ENCODE measurements at regions of chr18 and their contacts with region 1.

Region 1: GRCh38 chr18:55234366-55235093 is 275.3 kb upstream of the CCDC68 start:
- DNase-seq: peak; percentile 57
- ATAC-seq: peak; percentile 77
- H3K4me3 Mint-ChIP-seq: no peak overlapping the region
- H3K27ac Mint-ChIP-seq: peak overlapping the region; percentile 76
- H3K4me1 Mint-ChIP-seq: peaks cover 45% of the 10 kb centered on the region
- H3K27me3 Mint-ChIP-seq: no peaks in the 10 kb centered on the region
- CTCF ChIP-seq: peak; percentile 63

Region 2: GRCh38 chr18:55251254-55251971 is 16.9 kb after region 1 on chr18:
- CTCF ChIA-PET with region 1: interaction called, 31 read pairs
- POLR2A ChIA-PET with region 1: interaction called, 10 read pairs
- intact Hi-C with region 1: loop called (anchors 2 kb)
- DNase-seq: no peak
- ATAC-seq: no peak
- H3K4me3 Mint-ChIP-seq: peak overlapping the region; percentile 2
- H3K27ac Mint-ChIP-seq: peak overlapping the region; percentile 74
- H3K4me1 Mint-ChIP-seq: peaks cover 69% of the 10 kb centered on the region
- H3K27me3 Mint-ChIP-seq: no peaks in the 10 kb centered on the region
- CTCF ChIP-seq: no peak

Region 3: DNA sequence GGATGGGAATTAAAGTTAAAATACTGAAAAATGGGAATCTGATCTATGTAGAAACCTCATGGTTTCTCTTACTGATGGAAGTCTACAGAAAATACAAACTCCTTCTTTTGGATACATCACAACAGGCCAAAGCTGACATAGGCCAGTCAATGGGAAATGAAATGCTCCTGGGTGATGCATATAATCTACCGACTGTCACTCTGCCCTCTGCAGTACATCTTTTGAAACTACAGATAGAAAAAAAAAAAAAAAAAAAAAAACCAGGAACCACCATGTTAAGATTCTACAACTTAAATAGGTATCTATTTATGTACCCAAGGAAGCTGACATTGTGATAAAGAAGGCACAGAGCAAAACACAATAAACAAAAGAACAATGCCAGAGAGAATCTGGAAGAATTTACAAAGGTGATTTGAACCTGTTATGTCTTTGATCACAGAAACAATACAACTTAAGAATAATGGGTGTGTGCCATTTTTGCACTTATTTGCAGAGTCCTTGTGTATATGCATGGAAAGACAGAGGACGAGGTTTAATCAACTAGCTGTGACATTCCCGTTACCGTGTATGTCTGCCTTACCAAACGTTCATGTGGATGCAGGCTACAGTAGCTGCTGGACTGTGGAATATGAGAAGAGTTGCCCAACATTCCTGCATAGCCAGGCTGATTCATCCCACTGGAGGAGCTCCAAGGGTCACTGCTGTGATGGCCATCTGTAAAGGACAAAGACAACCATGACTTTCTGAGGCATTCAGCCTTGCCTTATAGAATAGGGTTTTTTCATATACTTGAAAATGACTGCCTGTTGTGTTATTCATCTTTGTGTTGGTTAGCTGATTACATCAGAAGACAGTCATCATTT is 40.7 kb after region 1 on chr18:
- CTCF ChIA-PET with region 1: interaction called, 165 read pairs
- POLR2A ChIA-PET with region 1: interaction called, 4 read pairs
- intact Hi-C with region 1: loop called (anchors 1 kb)
- DNase-seq: no peak
- ATAC-seq: peak; percentile 73
- H3K4me3 Mint-ChIP-seq: no peak overlapping the region
- H3K27ac Mint-ChIP-seq: peak overlapping the region; percentile 57
- H3K4me1 Mint-ChIP-seq: peaks cover 49% of the 10 kb centered on the region
- H3K27me3 Mint-ChIP-seq: no peaks in the 10 kb centered on the region
- CTCF ChIP-seq: no peak

Region 4: GRCh38 chr18:55376387-55376786 is 141.9 kb after region 1 on chr18:
- CTCF ChIA-PET with region 1: interaction called, 3 read pairs
- POLR2A ChIA-PET with region 1: no interaction called
- intact Hi-C with region 1: loop called (anchors 1 kb)
- DNase-seq: no peak
- ATAC-seq: peak; percentile 91
- H3K4me3 Mint-ChIP-seq: peak overlapping the region; percentile 13
- H3K27ac Mint-ChIP-seq: peak overlapping the region; percentile 87
- H3K4me1 Mint-ChIP-seq: peaks cover 41% of the 10 kb centered on the region
- H3K27me3 Mint-ChIP-seq: no peaks in the 10 kb centered on the region
- CTCF ChIP-seq: no peak

Region 5: GRCh38 chr18:55577812-55578539 is 343.4 kb after region 1 on chr18:
- CTCF ChIA-PET with region 1: interaction called, 3 read pairs
- POLR2A ChIA-PET with region 1: no interaction called
- intact Hi-C with region 1: loop called (anchors 2 kb)
- DNase-seq: no peak
- ATAC-seq: no peak
- H3K4me3 Mint-ChIP-seq: no peak overlapping the region
- H3K27ac Mint-ChIP-seq: no peak overlapping the region
- H3K4me1 Mint-ChIP-seq: peaks cover 17% of the 10 kb centered on the region
- H3K27me3 Mint-ChIP-seq: peaks cover 2% of the 10 kb centered on the region
- CTCF ChIP-seq: no peak

Region 6: GRCh38 chr18:56314396-56314795 is 1079.9 kb after region 1 on chr18:
- CTCF ChIA-PET with region 1: interaction called, 5 read pairs
- POLR2A ChIA-PET with region 1: no interaction called
- intact Hi-C with region 1: loop called (anchors 1 kb)
- DNase-seq: no peak
- ATAC-seq: peak; percentile 47
- H3K4me3 Mint-ChIP-seq: no peak overlapping the region
- H3K27ac Mint-ChIP-seq: no peak overlapping the region
- H3K4me1 Mint-ChIP-seq: peaks cover 23% of the 10 kb centered on the region
- H3K27me3 Mint-ChIP-seq: no peaks in the 10 kb centered on the region
- CTCF ChIP-seq: no peak